ENCODE measurements at regions of chr12 and their contacts with region 1.

Region 1: GRCh38 chr12:91577586-91578539 is 395.2 kb upstream of the DCN start:
- DNase-seq: no peak
- H3K4me3 ChIP-seq: peak overlapping the region in 53 of 59 donors; percentile 1 to 57 (median 31)
- H3K27ac ChIP-seq: peak overlapping the region in 55 of 59 donors; percentile 5 to 98 (median 72)
- H3K27me3 ChIP-seq: no peaks in the 10 kb centered on the region
- CTCF ChIP-seq: peak; percentile 44 to 90 (median 72)

Region 2: GRCh38 chr12:91382081-91382543 is 195.8 kb before region 1 on chr12:
- intact Hi-C with region 1: loop called in 1 of 2 experiments (anchors 10 kb)
- DNase-seq: peak; percentile 77 to 93 (median 86)
- H3K4me3 ChIP-seq: peak overlapping the region; percentile 28 to 77 (median 60)
- H3K27ac ChIP-seq: peak overlapping the region; percentile 55 to 98 (median 92)
- H3K27me3 ChIP-seq: no peaks in the 10 kb centered on the region
- CTCF ChIP-seq: peak; percentile 81 to 99 (median 93)

Region 3: DNA sequence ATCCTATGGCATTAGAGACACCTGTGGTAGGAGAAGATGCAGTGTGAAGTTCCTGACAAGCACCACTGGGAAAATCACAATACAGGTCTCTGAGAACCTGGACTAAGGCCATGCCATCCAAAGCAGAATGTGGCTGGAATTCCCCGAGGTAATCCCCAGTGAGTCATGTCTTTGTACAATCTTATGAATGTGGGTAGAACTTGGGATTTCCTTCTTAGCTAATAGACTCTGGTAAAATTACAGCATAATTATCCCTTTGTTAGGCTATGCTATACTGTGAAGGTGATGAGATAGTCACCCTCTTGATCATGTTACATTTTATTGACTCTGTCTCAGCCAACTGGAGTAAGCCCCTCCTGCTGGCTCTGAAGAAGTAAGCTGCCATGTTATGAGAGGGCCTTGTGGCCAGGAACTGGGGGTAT is 170.9 kb before region 1 on chr12:
- intact Hi-C with region 1: no loop called
- DNase-seq: no peak
- H3K4me3 ChIP-seq: no peak overlapping the region
- H3K27ac ChIP-seq: no peak overlapping the region
- H3K27me3 ChIP-seq: no peaks in the 10 kb centered on the region
- CTCF ChIP-seq: no peak

Region 4: DNA sequence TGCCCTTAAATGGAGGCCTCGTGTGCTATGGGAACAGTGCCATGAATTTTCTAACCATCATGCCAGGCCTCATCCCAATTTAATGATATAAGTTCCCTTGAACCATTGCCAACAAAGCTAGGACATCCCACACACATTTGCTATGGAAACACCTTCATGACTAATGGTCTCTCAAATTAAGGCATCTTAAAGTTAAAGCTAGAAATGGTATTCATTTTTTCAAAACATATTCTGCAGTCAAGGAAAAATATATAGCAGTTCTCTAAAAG is 450.5 kb after region 1 on chr12:
- intact Hi-C with region 1: loop called in 1 of 2 experiments (anchors 10 kb)
- DNase-seq: peak in 1 of 10 donors; percentile 25
- H3K4me3 ChIP-seq: no peak overlapping the region
- H3K27ac ChIP-seq: peak overlapping the region in 45 of 59 donors; percentile 5 to 88 (median 60)
- H3K27me3 ChIP-seq: no peaks in the 10 kb centered on the region
- CTCF ChIP-seq: no peak

Region 5: DNA sequence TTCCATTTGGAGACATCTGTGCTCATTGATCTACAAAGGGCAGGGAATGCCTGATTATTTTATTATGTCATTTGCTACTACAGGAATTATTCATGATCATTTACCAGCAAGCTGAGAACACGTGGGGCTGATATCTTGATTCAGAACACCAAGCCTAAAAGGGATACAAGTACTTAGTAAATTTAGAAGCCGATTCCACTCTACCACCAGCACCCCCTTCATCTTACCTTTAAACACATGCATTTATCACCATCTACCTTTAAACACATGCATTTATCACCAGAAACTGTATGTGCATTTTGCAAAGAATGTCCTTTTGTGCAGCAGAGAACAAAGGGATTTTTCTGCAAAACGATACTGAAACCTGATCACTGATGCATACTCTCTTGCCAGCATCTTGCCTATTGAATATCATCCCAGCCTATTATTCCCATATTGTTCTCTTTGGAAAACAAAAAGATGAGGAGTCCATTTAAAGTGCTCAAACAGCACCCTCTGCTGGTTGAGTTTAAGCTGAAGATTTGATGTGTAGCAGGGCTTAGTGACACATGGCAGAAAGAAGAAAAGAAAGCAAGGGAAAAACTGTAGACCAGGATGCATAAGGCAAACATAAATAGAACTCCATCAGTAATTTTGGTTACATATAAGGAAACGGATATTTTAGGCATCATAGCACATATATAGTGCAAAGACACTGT is 992.3 kb after region 1 on chr12:
- intact Hi-C with region 1: loop called in 1 of 2 experiments (anchors 2 kb)
- DNase-seq: peak in 4 of 10 donors; percentile 48 to 81 (median 64)
- H3K4me3 ChIP-seq: peak overlapping the region in 29 of 59 donors; percentile 3 to 54 (median 27)
- H3K27ac ChIP-seq: peak overlapping the region in 29 of 59 donors; percentile 1 to 82 (median 37)
- H3K27me3 ChIP-seq: no peaks in the 10 kb centered on the region
- CTCF ChIP-seq: peak; percentile 83 to 99 (median 93)

Measured in dorsolateral prefrontal cortex (tissue), 120 donors.